AG04450 (cell line): ENCODE measurements at regions of chr5 and their contacts with region 1.

Region 1: GRCh38 chr5:59193616-59194319 is 610.9 kb downstream of the RAB3C start:
- DNase-seq: no peak
- H3K4me3 ChIP-seq: no peak overlapping the region
- H3K27ac ChIP-seq: no peak overlapping the region
- H3K27me3 ChIP-seq: no peaks in the 10 kb centered on the region
- CTCF ChIP-seq: no peak

Region 2: GRCh38 chr5:59218424-59219045 is 24.8 kb after region 1 on chr5:
- CTCF ChIA-PET with region 1: interaction called, 23 read pairs
- POLR2A ChIA-PET with region 1: no interaction called
- DNase-seq: no peak
- H3K4me3 ChIP-seq: no peak overlapping the region
- H3K27ac ChIP-seq: no peak overlapping the region
- H3K27me3 ChIP-seq: peaks cover 2% of the 10 kb centered on the region
- CTCF ChIP-seq: peak; percentile 37